Psoas muscle (tissue), 8 donors: ENCODE measurements at regions of chr12 and their contacts with region 1.

Region 1: GRCh38 chr12:12611512-12612306 is at the start of gene CREBL2:
- DNase-seq: peak; percentile 96 to 98
- ATAC-seq: peak; percentile 96 to 98 (median 98)
- H3K4me3 ChIP-seq: peak within 1 kb of the TSS; percentile 87
- H3K27ac ChIP-seq: peak within 1 kb of the TSS; percentile 95
- H3K4me1 ChIP-seq: peaks cover 29% of the 10 kb centered on the region
- H3K27me3 ChIP-seq: no peaks in the 10 kb centered on the region
- CTCF ChIP-seq: no peak
- total RNA-seq, gene CREBL2: 6.1 to 9.2 (median 7.3) TPM

Region 2: DNA sequence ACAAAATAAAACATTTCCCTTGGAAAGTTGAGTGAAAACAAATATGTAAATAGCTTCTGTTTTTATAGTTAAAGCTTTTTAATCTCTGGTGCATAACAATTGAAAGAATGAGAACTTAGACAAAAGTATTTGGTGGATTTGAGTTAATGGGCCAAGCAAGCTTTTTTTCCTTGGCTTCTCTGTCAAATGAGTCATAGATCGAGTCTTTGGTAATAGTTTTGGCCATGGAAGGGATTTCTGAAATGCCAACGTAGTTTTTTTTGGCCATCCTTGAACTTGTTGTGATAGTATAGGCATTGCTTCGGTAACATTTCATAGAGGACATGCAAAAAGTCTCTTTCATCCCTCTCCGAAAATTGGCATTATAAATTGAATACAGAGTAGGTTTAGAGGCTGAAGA is 49.4 kb after region 1 on chr12:
- intact Hi-C with region 1: no loop called
- DNase-seq: no peak
- ATAC-seq: peak in 1 of 4 donors; percentile 45
- H3K4me3 ChIP-seq: no peak overlapping the region
- H3K27ac ChIP-seq: no peak overlapping the region
- H3K4me1 ChIP-seq: no peaks in the 10 kb centered on the region
- H3K27me3 ChIP-seq: no peaks in the 10 kb centered on the region
- CTCF ChIP-seq: no peak

Region 3: GRCh38 chr12:12696562-12697383 is 85.1 kb after region 1 on chr12:
- intact Hi-C with region 1: loop called in 1 of 2 experiments (anchors 5 kb)
- DNase-seq: peak; percentile 89 to 96
- ATAC-seq: peak; percentile 90 to 97 (median 92)
- H3K4me3 ChIP-seq: peak overlapping the region; percentile 69
- H3K27ac ChIP-seq: peak overlapping the region; percentile 94
- H3K4me1 ChIP-seq: peaks cover 7% of the 10 kb centered on the region
- H3K27me3 ChIP-seq: no peaks in the 10 kb centered on the region
- CTCF ChIP-seq: no peak